Transverse colon (tissue), 4 donors: ENCODE measurements at regions of chr1 and their contacts with region 1.

Region 1: GRCh38 chr1:231603598-231604275 is 22.9 kb upstream of the DISC1 start:
- DNase-seq: peak; percentile 48
- H3K4me3 ChIP-seq: peak overlapping the region; percentile 1 to 55 (median 35)
- H3K27ac ChIP-seq: peak overlapping the region; percentile 36 to 54 (median 48)
- H3K4me1 ChIP-seq: peaks cover 0 to 31% (median 10%) of the 10 kb centered on the region in 4 donors
- H3K27me3 ChIP-seq: no peaks in the 10 kb centered on the region
- CTCF ChIP-seq: peak; percentile 71 to 87 (median 80)
- EP300 ChIP-seq: no peak
- POLR2A ChIP-seq: no peak

Region 2: DNA sequence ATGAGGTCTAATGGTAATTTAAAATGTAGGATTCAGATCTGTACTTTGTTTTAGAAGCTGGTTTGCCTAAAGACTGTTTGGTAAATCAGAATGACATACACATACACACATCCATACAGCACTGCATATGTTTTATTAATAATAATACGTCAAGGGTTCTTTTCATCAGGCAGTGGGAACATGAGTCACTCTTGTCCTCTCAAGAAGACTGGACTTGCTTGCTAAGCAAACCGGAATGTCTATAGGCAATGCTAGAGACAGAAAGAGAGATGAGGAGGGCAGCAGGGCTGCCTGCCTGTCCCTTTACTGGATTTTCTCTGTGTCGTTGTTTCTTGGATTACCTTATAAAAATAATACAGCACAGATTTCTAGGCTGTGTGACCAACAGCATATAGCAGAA is 1655.8 kb before region 1 on chr1:
- in situ Hi-C with region 1: no loop called
- intact Hi-C with region 1: loop called (anchors 5 kb)
- DNase-seq: no peak
- H3K4me3 ChIP-seq: no peak overlapping the region
- H3K27ac ChIP-seq: no peak overlapping the region
- H3K4me1 ChIP-seq: no peaks in the 10 kb centered on the region
- H3K27me3 ChIP-seq: no peaks in the 10 kb centered on the region
- CTCF ChIP-seq: no peak
- EP300 ChIP-seq: no peak
- POLR2A ChIP-seq: no peak

Region 3: DNA sequence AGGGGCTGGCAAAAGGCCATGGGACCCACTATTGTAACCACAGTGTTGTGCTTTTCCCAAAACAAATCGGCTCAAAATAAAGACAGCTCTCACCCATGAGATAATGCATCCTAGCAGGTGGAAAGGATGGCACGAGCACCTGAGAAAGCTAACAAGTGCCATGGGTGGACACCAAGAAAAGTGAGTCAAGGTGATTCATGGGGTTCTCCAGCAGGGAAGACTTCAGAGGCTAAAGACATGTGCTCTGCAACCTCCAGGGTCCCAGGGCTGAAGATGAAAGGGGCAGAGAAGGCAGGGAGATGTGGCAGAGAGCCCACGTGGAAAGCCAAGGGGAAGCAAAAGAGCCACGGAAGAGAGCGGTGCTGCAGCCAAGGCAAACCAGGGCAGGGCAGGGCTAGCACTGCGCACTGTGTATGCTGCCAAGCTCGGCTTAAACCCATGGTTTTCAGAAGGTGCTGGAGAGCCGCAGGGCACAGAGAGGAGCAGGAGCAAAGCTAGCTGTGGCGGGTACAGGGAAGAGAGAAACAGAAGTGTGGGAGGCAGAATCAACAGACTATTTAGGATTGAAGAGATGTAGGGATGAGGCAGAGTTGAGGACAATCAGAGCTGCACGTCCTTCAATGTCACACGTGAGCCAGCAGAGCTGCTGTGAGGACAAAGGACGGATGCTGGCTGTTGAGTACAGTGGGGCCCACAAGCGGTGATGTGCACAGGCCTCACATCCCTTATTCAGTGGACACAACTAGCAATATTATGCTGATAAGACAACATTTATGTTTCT is 693.6 kb before region 1 on chr1:
- in situ Hi-C with region 1: no loop called
- intact Hi-C with region 1: no loop called
- DNase-seq: no peak
- H3K4me3 ChIP-seq: no peak overlapping the region
- H3K27ac ChIP-seq: peak overlapping the region in 3 of 4 donors; percentile 20 to 28 (median 28)
- H3K4me1 ChIP-seq: peaks cover 0 to 5% (median 0%) of the 10 kb centered on the region in 4 donors
- H3K27me3 ChIP-seq: no peaks in the 10 kb centered on the region
- CTCF ChIP-seq: no peak
- EP300 ChIP-seq: no peak
- POLR2A ChIP-seq: no peak

Region 4: GRCh38 chr1:231340328-231341013 is 263.3 kb before region 1 on chr1:
- in situ Hi-C with region 1: loop called in 1 of 4 experiments (anchors 10 kb)
- intact Hi-C with region 1: no loop called
- DNase-seq: no peak
- H3K4me3 ChIP-seq: no peak overlapping the region
- H3K27ac ChIP-seq: no peak overlapping the region
- H3K4me1 ChIP-seq: peaks cover 5 to 35% (median 26%) of the 10 kb centered on the region in 4 donors
- H3K27me3 ChIP-seq: no peaks in the 10 kb centered on the region
- CTCF ChIP-seq: no peak
- EP300 ChIP-seq: no peak
- POLR2A ChIP-seq: no peak

Region 5: GRCh38 chr1:231357831-231358354 is 245.8 kb before region 1 on chr1:
- in situ Hi-C with region 1: loop called in 2 of 4 experiments (anchors 5 to 10 kb)
- intact Hi-C with region 1: loop called (anchors 5 kb)
- DNase-seq: peak; percentile 19
- H3K4me3 ChIP-seq: no peak overlapping the region
- H3K27ac ChIP-seq: peak overlapping the region in 2 of 4 donors; percentile 16 to 51
- H3K4me1 ChIP-seq: peaks cover 0 to 6% (median 4%) of the 10 kb centered on the region in 4 donors
- H3K27me3 ChIP-seq: no peaks in the 10 kb centered on the region
- CTCF ChIP-seq: peak; percentile 67 to 85 (median 75)
- EP300 ChIP-seq: no peak
- POLR2A ChIP-seq: no peak

Region 6: GRCh38 chr1:231364192-231364591 is 239.5 kb before region 1 on chr1:
- in situ Hi-C with region 1: loop called in 2 of 4 experiments (anchors 5 to 10 kb)
- intact Hi-C with region 1: loop called (anchors 5 kb)
- DNase-seq: no peak
- H3K4me3 ChIP-seq: no peak overlapping the region
- H3K27ac ChIP-seq: no peak overlapping the region
- H3K4me1 ChIP-seq: no peaks in the 10 kb centered on the region
- H3K27me3 ChIP-seq: no peaks in the 10 kb centered on the region
- CTCF ChIP-seq: no peak
- EP300 ChIP-seq: no peak
- POLR2A ChIP-seq: no peak

Region 7: DNA sequence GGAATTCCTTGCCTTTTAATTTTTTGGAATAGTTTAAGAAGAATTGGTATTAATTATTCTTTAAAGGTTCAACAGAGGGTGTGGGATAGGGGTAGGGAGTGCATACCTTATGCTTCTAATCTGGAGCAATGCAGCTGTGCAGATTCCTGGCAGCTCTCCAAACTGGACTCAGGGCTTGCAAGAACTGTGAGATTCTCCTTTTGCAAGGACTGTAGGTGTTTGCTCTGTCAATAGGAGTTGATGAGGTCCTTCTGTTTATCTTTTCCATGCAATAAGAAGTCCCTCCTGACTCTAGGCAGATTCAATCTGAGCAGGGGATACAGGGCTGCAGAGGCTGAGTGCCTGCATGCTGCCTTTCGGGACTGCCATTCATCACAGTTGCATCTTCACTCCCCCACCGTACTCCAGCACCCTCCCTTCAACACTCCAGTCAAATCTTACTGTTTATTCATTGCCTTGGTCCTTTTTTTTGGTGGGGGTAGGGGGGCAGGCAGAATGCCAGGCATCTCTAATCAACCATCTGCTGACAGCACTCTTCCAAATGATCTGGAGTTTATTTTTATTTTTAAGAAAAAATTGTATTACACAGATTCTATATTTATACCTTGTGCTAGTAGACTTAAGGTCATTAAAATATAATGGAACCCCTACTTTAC is 145.2 kb after region 1 on chr1:
- in situ Hi-C with region 1: no loop called
- intact Hi-C with region 1: no loop called
- DNase-seq: no peak
- H3K4me3 ChIP-seq: no peak overlapping the region
- H3K27ac ChIP-seq: no peak overlapping the region
- H3K4me1 ChIP-seq: peaks cover 0 to 5% (median 0%) of the 10 kb centered on the region in 4 donors
- H3K27me3 ChIP-seq: no peaks in the 10 kb centered on the region
- CTCF ChIP-seq: no peak
- EP300 ChIP-seq: no peak
- POLR2A ChIP-seq: no peak

Region 8: GRCh38 chr1:231763456-231763855 is 159.7 kb after region 1 on chr1:
- in situ Hi-C with region 1: no loop called
- intact Hi-C with region 1: no loop called
- DNase-seq: no peak
- H3K4me3 ChIP-seq: no peak overlapping the region
- H3K27ac ChIP-seq: no peak overlapping the region
- H3K4me1 ChIP-seq: no peaks in the 10 kb centered on the region
- H3K27me3 ChIP-seq: no peaks in the 10 kb centered on the region
- CTCF ChIP-seq: no peak
- EP300 ChIP-seq: no peak
- POLR2A ChIP-seq: no peak

Region 9: DNA sequence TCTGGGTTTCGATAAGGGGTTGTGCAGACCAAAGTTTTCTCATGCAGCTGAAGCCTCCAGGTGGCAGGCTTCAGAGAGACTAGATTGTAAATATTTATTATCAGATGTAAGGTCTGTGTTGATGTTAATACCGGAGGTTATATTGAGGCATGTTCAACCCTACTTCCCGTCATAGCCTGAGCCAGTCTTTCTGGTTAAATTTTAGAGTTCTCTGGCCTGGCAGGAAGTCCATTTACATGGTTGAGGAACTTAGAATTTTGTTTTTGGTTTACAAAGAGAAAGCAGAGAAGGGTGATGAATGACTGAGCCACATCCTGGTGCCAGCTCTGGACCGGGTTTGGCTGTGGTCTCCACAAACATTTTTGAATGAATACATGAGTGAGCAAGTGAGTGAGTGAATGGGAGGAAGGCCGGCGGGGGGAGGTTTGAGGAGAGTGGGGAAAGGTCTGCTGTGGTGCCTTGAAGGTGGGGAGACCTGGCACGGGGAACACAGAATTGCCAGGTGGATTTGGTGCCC is 241.3 kb after region 1 on chr1:
- in situ Hi-C with region 1: no loop called
- intact Hi-C with region 1: no loop called
- DNase-seq: no peak
- H3K4me3 ChIP-seq: no peak overlapping the region
- H3K27ac ChIP-seq: no peak overlapping the region
- H3K4me1 ChIP-seq: no peaks in the 10 kb centered on the region
- H3K27me3 ChIP-seq: no peaks in the 10 kb centered on the region
- CTCF ChIP-seq: no peak
- EP300 ChIP-seq: no peak
- POLR2A ChIP-seq: no peak